Naive thymus-derived CD4-positive, alpha-beta T cell (primary cell): ENCODE measurements at regions of chr1 and their contacts with region 1.

Region 1: DNA sequence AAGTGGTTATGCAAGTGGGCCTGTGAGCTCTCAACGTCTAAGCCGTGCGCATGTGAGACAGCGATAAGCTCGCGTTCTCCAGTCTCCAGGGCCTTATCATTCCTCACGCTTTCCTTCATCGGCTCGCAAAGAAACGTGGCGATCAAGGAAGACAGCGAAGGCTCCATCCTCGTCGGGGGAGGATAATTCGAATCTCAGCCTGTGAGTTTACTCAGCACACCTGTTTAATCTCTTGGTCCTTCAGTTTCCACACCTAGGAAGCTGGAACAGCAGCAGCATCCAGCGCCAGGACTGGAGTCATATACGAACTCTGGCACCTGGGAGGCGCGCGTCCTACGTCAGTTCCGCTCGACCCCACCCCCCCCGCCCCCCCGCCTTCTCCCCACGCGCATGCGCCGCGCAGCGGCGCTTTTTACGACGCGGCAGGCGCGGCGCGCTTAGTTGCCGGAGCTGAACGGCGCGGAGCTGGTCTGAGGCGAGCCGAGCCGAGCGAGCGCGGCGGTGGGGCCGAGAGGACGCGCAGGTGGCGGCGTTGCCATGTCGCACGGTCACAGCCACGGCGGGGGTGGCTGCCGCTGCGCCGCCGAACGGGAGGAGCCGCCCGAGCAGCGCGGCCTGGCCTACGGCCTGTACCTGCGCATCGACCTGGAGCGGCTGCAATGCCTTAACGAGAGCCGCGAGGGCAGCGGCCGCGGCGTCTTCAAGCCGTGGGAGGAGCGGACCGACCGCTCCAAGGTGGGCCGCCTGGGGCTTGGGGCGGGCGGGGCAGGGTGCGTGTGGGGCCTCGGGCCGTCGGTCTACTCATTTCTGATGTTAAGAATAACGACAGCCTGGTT is at the start of gene PITHD1:
- DNase-seq: peak; percentile 75 to 86 (median 83)
- ATAC-seq: peak; percentile 91
- H3K4me3 ChIP-seq: peak within 1 kb of the TSS; percentile 95
- H3K4me3 Mint-ChIP-seq: peak within 1 kb of the TSS; percentile 84 to 98 (median 94)
- H3K27ac ChIP-seq: peak within 1 kb of the TSS; percentile 97
- H3K27ac Mint-ChIP-seq: peak within 1 kb of the TSS; percentile 87 to 99 (median 96)
- H3K4me1 ChIP-seq: peaks cover 17 to 22% of the 10 kb centered on the region in 2 donors
- H3K4me1 Mint-ChIP-seq: peaks cover 17 to 65% (median 49%) of the 10 kb centered on the region in 7 donors
- H3K27me3 ChIP-seq: no peaks in the 10 kb centered on the region
- H3K27me3 Mint-ChIP-seq: no peaks in the 10 kb centered on the region
- total RNA-seq, gene PITHD1: 57.6 to 81.9 (median 76.0) TPM

Region 2: DNA sequence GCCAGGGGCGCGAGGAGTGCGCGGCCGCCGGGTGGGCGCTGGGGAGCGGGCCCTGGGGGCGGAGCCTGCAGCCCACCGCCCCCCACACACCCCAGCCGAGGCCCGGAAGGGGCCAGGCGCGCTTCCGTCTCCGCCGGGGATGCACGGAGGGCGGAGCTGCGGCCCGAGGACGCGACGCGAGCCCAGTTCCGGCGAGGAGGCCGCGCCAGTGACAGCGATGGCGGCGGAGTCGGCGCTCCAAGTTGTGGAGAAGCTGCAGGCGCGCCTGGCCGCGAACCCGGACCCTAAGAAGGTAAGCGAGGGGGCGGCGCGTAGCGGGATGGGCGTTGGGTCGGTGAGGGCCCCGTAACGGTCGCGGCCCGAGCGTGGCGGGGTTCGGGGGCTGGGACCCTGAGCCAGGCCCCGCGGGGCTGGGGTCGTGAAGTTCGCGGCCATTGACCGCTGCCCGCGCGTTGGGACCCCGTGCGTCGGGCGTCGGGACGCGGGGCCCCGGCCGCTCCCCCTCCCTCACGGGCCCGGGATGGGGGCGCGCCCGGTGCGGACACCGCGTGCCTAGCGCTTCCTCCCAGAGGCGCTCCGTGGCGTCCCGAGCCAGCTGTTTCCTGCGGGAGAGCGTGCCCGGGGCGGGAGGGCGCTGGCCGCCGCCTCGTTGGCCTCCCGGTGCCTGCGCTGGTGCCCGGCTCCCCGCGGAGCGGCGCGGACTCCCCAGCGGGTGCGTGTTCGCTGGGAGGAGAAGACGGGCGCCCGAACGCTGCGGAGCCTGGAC is 34.7 kb before region 1 on chr1 and contains the start of gene ELOA:
- CTCF ChIA-PET with region 1: interaction called, 3 read pairs
- POLR2A ChIA-PET with region 1: interaction called, 9 read pairs
- intact Hi-C with region 1: loop called (anchors 1 kb)
- DNase-seq: peak; percentile 68 to 84 (median 77)
- ATAC-seq: peak; percentile 98
- H3K4me3 ChIP-seq: peak within 1 kb of the TSS; percentile 87
- H3K4me3 Mint-ChIP-seq: peak within 1 kb of the TSS; percentile 90 to 93 (median 92)
- H3K27ac ChIP-seq: peak within 1 kb of the TSS; percentile 96
- H3K27ac Mint-ChIP-seq: peak within 1 kb of the TSS; percentile 80 to 95 (median 91)
- H3K4me1 ChIP-seq: peaks cover 22 to 39% of the 10 kb centered on the region in 2 donors
- H3K4me1 Mint-ChIP-seq: peaks cover 35 to 52% (median 49%) of the 10 kb centered on the region in 7 donors
- H3K27me3 ChIP-seq: no peaks in the 10 kb centered on the region
- H3K27me3 Mint-ChIP-seq: no peaks in the 10 kb centered on the region
- total RNA-seq, gene ELOA: 28.0 to 36.1 (median 30.4) TPM

Region 3: DNA sequence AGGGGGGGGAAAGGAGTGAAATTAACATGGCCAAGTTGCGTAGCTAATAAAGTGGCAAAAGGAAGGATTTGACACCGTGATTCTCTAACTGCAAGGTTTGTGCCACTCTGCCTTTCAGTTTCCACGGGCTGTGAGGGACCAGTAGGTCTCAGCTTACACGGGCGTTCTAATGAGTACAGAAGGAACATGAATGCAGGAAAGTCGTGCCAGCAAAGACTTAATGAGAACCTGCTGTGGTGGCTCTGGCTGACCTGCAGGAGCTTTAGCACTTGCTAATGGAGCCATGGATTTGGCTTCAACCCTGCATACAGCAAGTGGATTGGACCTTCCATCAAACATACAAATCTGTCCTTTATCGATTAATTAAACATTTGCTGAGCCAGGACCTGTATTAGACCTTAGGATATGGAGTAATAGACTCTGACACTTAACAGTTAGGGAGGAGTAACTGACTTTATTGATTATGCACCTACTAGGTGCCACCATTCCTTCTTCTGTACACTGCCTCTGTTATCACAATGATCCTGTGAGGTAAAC is 15.1 kb before region 1 on chr1:
- CTCF ChIA-PET with region 1: no interaction called
- POLR2A ChIA-PET with region 1: no interaction called
- intact Hi-C with region 1: no loop called
- DNase-seq: no peak
- ATAC-seq: no peak
- H3K4me3 ChIP-seq: no peak overlapping the region
- H3K4me3 Mint-ChIP-seq: no peak overlapping the region
- H3K27ac ChIP-seq: no peak overlapping the region
- H3K27ac Mint-ChIP-seq: peak overlapping the region in 1 of 9 donors; percentile 17
- H3K4me1 ChIP-seq: no peaks in the 10 kb centered on the region
- H3K4me1 Mint-ChIP-seq: peaks cover 0 to 10% (median 0%) of the 10 kb centered on the region in 7 donors
- H3K27me3 ChIP-seq: no peaks in the 10 kb centered on the region
- H3K27me3 Mint-ChIP-seq: no peaks in the 10 kb centered on the region

Region 4: GRCh38 chr1:23790696-23791515 is 12.7 kb after region 1 on chr1 and contains the start of gene LYPLA2:
- CTCF ChIA-PET with region 1: no interaction called
- POLR2A ChIA-PET with region 1: interaction called, 68 read pairs
- intact Hi-C with region 1: loop called (anchors 1 kb)
- DNase-seq: peak; percentile 65 to 90 (median 79)
- ATAC-seq: peak; percentile 91
- H3K4me3 ChIP-seq: peak within 1 kb of the TSS; percentile 96
- H3K4me3 Mint-ChIP-seq: peak within 1 kb of the TSS; percentile 91 to 98 (median 97)
- H3K27ac ChIP-seq: peak within 1 kb of the TSS; percentile 88
- H3K27ac Mint-ChIP-seq: peak within 1 kb of the TSS; percentile 88 to 99 (median 97)
- H3K4me1 ChIP-seq: peaks cover 6 to 18% of the 10 kb centered on the region in 2 donors
- H3K4me1 Mint-ChIP-seq: peaks cover 9 to 28% (median 23%) of the 10 kb centered on the region in 7 donors
- H3K27me3 ChIP-seq: no peaks in the 10 kb centered on the region
- H3K27me3 Mint-ChIP-seq: no peaks in the 10 kb centered on the region
- total RNA-seq, gene LYPLA2: 40.7 to 83.8 (median 48.2) TPM

Region 5: GRCh38 chr1:23825076-23825761 is 47.0 kb after region 1 on chr1 and contains the start of gene HMGCL:
- CTCF ChIA-PET with region 1: no interaction called
- POLR2A ChIA-PET with region 1: interaction called, 10 read pairs
- intact Hi-C with region 1: loop called in 1 of 2 experiments (anchors 1 kb)
- DNase-seq: peak; percentile 64 to 89 (median 81)
- ATAC-seq: peak; percentile 99
- H3K4me3 ChIP-seq: peak within 1 kb of the TSS; percentile 95
- H3K4me3 Mint-ChIP-seq: peak within 1 kb of the TSS; percentile 86 to 96 (median 94)
- H3K27ac ChIP-seq: peak within 1 kb of the TSS; percentile 95
- H3K27ac Mint-ChIP-seq: peak within 1 kb of the TSS; percentile 76 to 98 (median 96)
- H3K4me1 ChIP-seq: peaks cover 6% of the 10 kb centered on the region in 2 donors
- H3K4me1 Mint-ChIP-seq: peaks cover 11 to 33% (median 20%) of the 10 kb centered on the region in 7 donors
- H3K27me3 ChIP-seq: no peaks in the 10 kb centered on the region
- H3K27me3 Mint-ChIP-seq: peaks cover 0 to 5% (median 0%) of the 10 kb centered on the region in 5 donors
- total RNA-seq, gene HMGCL: 16.2 to 38.9 (median 27.3) TPM

Region 6: DNA sequence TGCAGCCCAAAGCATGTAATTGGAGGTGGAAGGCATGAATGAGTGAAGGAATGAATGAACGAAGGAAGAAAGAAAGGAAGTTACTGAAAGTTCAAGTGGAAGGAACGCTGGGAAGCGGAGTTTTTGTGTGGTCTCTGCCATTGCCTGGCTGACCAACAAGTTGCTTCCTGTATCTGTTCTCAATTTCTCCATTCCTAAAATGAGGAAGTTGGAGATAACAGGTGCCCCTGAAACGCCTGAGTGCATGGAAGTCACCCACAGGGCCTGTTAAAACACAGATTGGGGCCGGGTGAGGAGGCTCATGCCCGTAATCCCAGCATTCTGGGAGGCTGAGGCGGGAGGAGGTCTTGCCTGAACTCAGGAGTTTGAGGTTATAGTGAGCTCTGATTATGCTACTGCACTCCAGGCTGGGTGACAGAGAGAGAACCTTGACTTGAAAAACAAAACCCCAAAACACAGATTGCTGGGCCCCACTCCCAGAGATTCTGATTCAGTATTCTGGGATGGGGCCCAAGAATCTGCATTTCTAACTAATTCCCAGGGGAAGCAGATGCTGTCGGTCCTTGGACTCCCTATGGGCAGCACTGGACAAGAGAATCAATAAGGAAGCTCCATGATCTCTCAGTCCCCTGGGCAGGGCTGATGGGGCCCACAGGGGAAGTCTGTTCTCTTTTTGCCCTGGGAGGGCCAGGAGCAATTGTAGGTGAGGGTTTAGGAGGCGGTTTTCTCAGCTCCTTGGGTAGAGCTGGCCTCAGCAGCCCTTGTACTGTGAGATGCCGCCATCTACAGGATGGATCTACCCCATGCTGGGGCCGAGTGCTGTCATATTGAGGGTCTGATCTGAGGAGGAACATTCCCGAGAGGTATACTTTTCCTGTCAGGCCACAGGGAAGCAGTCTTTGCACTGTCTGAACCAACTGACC is 138.3 kb after region 1 on chr1:
- CTCF ChIA-PET with region 1: interaction called, 10 read pairs
- POLR2A ChIA-PET with region 1: no interaction called
- intact Hi-C with region 1: no loop called
- DNase-seq: peak; percentile 24 to 66 (median 55)
- ATAC-seq: peak; percentile 95
- H3K4me3 ChIP-seq: no peak overlapping the region
- H3K4me3 Mint-ChIP-seq: no peak overlapping the region
- H3K27ac ChIP-seq: no peak overlapping the region
- H3K27ac Mint-ChIP-seq: peak overlapping the region in 2 of 9 donors; percentile 64 to 72
- H3K4me1 ChIP-seq: peaks cover 7 to 8% of the 10 kb centered on the region in 2 donors
- H3K4me1 Mint-ChIP-seq: peaks cover 10 to 41% (median 30%) of the 10 kb centered on the region in 7 donors
- H3K27me3 ChIP-seq: no peaks in the 10 kb centered on the region
- H3K27me3 Mint-ChIP-seq: peaks cover 0 to 2% (median 0%) of the 10 kb centered on the region in 5 donors